MCF 10A (cell line): ENCODE measurements at regions of chr1 and their contacts with region 1.

Region 1: DNA sequence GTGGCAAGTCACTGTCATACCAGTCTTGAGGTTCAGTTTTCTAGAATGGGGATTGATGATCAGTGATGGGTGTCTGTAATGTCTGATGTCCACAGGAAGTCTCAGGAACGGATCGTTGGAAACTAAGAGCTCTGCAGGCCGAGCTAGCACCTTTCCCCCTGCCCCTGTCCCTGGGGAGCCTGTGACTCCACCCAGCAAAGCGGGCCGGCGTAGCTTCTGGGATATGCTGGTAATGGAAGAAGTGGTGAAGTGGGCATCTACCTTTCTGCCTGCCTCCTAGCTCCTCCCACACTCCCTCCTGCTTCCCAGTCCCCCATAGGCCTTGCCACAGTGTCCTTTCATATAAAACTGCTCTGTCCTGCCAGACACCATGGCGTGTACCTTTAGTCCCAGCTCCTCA is 13.4 kb downstream of the HYI start:
- DNase-seq: no peak
- H3K4me3 Mint-ChIP-seq: no peak overlapping the region
- H3K27ac Mint-ChIP-seq: no peak overlapping the region
- H3K4me1 Mint-ChIP-seq: no peaks in the 10 kb centered on the region
- H3K27me3 Mint-ChIP-seq: no peaks in the 10 kb centered on the region
- CTCF ChIP-seq: no peak

Region 2: DNA sequence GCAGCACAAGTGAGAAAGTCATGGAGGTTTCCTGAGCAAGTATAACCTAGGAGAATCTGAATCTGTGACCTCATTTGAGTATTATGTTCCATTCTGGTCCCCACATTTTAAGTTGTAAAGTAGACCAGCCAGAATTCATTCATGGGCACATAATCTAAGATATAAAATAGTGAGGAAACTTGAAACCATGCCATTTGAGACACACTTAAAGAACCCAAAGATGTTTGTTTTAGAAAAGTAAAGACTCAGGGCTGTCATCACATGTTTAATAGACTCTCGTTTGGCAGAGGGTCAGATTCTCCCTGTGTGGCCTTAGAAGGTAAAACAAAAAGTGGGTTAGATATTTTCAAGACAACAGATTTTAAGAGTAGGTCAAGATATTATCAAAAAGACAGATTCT is 44.3 kb before region 1 on chr1:
- CTCF ChIA-PET with region 1: no interaction called
- POLR2A ChIA-PET with region 1: no interaction called
- intact Hi-C with region 1: no loop called
- DNase-seq: no peak
- H3K4me3 Mint-ChIP-seq: no peak overlapping the region
- H3K27ac Mint-ChIP-seq: no peak overlapping the region
- H3K4me1 Mint-ChIP-seq: peaks cover 10% of the 10 kb centered on the region
- H3K27me3 Mint-ChIP-seq: no peaks in the 10 kb centered on the region
- CTCF ChIP-seq: no peak

Region 3: DNA sequence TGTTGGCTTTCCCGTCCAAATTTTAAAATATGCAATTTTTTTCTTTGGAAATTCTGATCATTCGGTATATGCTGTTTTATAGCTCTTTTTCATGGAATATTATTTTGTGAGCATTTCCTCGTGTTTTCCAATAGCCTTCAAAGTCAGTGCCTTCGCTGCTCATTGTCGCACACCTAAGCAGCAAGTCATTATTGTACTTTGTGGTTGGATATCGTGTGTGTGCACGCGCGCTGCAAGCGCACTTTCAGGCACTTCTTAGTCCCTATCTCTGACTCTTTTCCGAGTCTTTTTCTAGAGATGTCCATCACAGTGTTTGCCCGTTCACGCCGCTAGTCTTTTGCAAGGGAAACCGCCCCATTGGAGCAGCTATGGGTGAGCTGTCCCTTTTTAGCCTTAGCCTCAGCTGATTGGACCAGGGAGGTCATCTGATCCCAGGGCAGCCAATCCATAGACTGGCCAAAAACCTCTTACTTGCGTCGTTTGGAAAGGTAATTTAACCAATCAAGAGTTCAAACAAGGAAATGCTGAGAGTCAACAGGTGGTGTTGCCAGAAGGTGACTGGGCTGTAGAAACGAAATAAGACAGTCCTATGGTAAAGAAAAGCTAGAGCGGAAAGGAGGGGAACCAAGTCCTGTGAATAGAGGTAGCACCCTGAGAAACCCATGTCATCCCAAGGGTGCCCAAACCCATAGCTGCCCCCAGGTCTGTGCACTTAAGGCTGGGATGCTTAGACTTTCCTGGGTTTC is 14.1 kb after region 1 on chr1:
- CTCF ChIA-PET with region 1: no interaction called
- POLR2A ChIA-PET with region 1: interaction called, 16 read pairs
- intact Hi-C with region 1: no loop called
- DNase-seq: peak; percentile 82
- H3K4me3 Mint-ChIP-seq: peak overlapping the region; percentile 78
- H3K27ac Mint-ChIP-seq: peak overlapping the region; percentile 79
- H3K4me1 Mint-ChIP-seq: peaks cover 16% of the 10 kb centered on the region
- H3K27me3 Mint-ChIP-seq: no peaks in the 10 kb centered on the region
- CTCF ChIP-seq: no peak